GM12878 (cell line): ENCODE measurements at regions of chr1 and their contacts with region 1.

Region 1: DNA sequence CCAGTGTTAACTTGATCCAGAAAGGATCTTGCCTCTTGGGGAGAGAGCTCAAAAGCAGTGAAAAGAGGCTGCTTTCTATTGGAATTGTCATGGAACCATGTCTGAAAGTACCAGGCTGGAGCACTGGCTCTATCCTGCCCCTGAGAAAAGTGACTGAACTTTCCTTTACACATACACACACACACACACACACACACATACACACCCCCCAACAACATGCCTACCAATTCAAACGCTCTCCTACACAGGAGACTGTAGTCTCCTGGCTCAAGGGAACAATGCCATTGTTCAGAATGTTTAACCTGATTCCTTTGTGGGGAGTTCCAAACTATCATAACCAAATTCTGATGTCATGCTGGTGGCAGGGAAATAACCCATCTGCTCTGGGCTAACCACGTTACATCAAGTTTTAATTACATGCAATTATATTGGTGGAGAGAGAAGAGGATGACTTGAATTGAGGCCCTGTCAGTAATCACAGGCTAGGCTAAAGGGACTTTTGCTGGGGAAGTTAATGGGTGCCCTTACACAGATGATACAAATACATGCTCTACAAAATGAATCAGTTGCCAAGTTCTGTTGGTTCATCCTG is 52.3 kb upstream of the DUSP10 start:
- DNase-seq: peak; percentile 82
- ATAC-seq: peak; percentile 90
- H3K4me3 ChIP-seq: no peak overlapping the region
- H3K27ac ChIP-seq: peak overlapping the region; percentile 69
- H3K4me1 ChIP-seq: peaks cover 25% of the 10 kb centered on the region
- H3K27me3 ChIP-seq: no peaks in the 10 kb centered on the region
- CTCF ChIP-seq: no peak
- EP300 ChIP-seq: peak; percentile 88 to 93; a peak in 3 of 4 replicates
- POLR2A ChIP-seq: no peak; the same call in 1 of the 2 replicates
- RAD21 ChIP-seq: no peak

Region 2: DNA sequence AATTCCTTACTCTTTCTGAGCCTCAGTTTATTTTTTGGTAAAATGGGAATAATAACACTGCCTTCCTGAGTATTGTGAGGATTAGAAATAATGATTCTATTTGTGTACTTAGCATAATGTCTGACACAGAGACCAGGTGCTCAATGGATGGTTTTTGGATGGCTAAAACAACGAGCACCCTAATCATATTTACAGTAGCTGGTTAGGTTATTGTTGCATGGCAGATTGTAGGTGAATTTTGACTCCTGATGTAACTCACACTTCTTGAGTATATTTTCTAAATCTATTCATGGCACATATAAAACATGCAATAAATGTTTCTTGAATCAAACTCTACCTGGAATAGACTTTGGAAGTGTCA is 40.4 kb before region 1 on chr1:
- CTCF ChIA-PET with region 1: interaction called, 3 read pairs
- POLR2A ChIA-PET with region 1: interaction called, 7 read pairs
- RAD21 ChIA-PET with region 1: interaction called, 5 read pairs
- SMC1A ChIA-PET with region 1: interaction called, 11 read pairs
- in situ Hi-C with region 1: no loop called
- intact Hi-C with region 1: loop called (anchors 1 kb)
- DNase-seq: no peak
- ATAC-seq: peak; percentile 58
- H3K4me3 ChIP-seq: no peak overlapping the region
- H3K27ac ChIP-seq: peak overlapping the region; percentile 73
- H3K4me1 ChIP-seq: peaks cover 49% of the 10 kb centered on the region
- H3K27me3 ChIP-seq: no peaks in the 10 kb centered on the region
- CTCF ChIP-seq: no peak
- EP300 ChIP-seq: no peak
- POLR2A ChIP-seq: no peak
- RAD21 ChIP-seq: no peak

Region 3: GRCh38 chr1:221761354-221762002 is 32.7 kb before region 1 on chr1:
- CTCF ChIA-PET with region 1: interaction called, 3 read pairs
- POLR2A ChIA-PET with region 1: interaction called, 7 read pairs
- RAD21 ChIA-PET with region 1: interaction called, 10 read pairs
- SMC1A ChIA-PET with region 1: interaction called, 11 read pairs
- in situ Hi-C with region 1: no loop called
- intact Hi-C with region 1: no loop called
- DNase-seq: peak; percentile 91
- ATAC-seq: peak; percentile 80
- H3K4me3 ChIP-seq: peak overlapping the region; percentile 26; the same call in 1 of the 2 replicates
- H3K27ac ChIP-seq: peak overlapping the region; percentile 90
- H3K4me1 ChIP-seq: peaks cover 64% of the 10 kb centered on the region
- H3K27me3 ChIP-seq: no peaks in the 10 kb centered on the region
- CTCF ChIP-seq: no peak
- EP300 ChIP-seq: peak in 1 of 2 experiments; percentile 13; a peak in 1 of 4 replicates
- POLR2A ChIP-seq: 0 out of 2 replicates have a peak, but pooled peaks have one; percentile 26
- RAD21 ChIP-seq: 0 out of 2 replicates have a peak, but pooled peaks have one; percentile 6

Region 4: DNA sequence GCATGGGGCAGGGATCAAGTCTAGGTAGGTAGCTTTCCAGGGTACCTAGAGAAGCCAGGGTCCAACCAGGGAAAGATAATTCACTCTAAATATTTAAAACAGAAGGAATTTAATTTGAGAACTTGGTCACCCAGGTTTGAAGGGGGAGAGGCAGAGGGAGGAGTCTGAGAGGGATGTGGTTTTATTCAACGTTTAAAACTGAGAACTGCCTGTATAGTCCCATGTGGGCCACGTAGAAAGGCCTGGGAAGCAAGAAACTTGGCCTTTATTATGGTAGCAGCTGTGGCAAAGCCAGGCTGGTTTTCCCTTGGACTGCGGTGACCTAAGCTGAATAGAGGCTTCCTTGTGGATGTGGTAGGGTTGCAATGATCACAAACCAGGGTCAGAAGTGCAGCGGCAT is 10.2 kb before region 1 on chr1:
- CTCF ChIA-PET with region 1: interaction called, 17 read pairs
- POLR2A ChIA-PET with region 1: interaction called, 7 read pairs
- RAD21 ChIA-PET with region 1: interaction called, 69 read pairs
- SMC1A ChIA-PET with region 1: interaction called, 49 read pairs
- in situ Hi-C with region 1: no loop called
- intact Hi-C with region 1: no loop called
- DNase-seq: no peak
- ATAC-seq: peak; percentile 18; the same call in 2 of the 3 replicates
- H3K4me3 ChIP-seq: no peak overlapping the region
- H3K27ac ChIP-seq: no peak overlapping the region
- H3K4me1 ChIP-seq: peaks cover 51% of the 10 kb centered on the region
- H3K27me3 ChIP-seq: no peaks in the 10 kb centered on the region
- CTCF ChIP-seq: no peak
- EP300 ChIP-seq: no peak
- POLR2A ChIP-seq: no peak
- RAD21 ChIP-seq: no peak

Region 5: DNA sequence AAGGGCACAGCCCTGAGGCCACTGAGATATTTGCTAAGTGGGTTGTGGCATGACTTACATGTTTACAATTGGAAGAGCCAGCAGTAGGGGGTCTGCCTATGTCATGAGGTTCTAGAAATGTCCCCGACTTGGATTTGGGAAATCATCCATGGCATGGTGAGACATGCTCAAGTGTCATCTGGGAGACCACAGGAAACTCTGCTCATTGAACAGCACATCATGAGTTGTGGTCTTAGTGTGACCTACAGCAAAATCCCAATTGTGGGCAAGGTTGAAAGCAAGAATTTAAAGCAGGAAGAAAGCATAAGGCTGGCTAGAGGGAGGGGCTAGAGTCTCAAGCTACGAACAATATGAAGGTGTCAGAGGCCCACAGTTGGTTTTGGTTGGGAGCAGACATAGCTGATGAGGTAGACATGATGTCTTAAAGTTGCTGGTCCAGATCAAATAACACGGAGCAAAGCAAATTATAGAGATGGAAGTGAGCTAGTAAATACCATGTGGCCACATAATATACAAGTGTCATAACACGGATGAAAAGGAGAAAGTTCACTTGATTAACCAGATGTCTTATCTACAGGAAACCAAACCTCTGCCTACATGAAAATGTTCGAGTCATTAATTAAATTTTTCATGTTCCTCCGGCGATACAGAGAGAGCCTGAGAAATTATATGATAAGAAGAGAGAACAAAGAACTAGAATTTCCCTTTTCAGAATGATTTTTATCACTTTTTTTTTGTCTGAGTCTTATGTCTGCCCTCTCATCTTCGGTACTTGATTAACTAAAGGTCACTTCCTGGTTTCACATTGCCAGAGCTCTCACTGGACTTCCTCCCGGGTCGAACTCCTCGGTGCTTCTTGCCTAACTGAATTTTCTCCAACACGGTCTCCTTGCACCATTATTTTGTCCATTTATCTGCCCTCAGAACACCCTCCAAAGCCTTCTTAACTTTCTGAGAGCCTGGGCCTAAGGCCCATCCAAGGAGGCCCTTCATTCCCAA is 15.2 kb after region 1 on chr1:
- CTCF ChIA-PET with region 1: interaction called, 9 read pairs
- POLR2A ChIA-PET with region 1: interaction called, 7 read pairs
- RAD21 ChIA-PET with region 1: interaction called, 5 read pairs
- SMC1A ChIA-PET with region 1: interaction called, 26 read pairs
- in situ Hi-C with region 1: no loop called
- intact Hi-C with region 1: no loop called
- DNase-seq: no peak
- ATAC-seq: peak; percentile 73
- H3K4me3 ChIP-seq: 0 out of 2 replicates have a peak overlapping the region, but pooled peaks have one; percentile 0
- H3K27ac ChIP-seq: 0 out of 2 replicates have a peak overlapping the region, but pooled peaks have one; percentile 6
- H3K4me1 ChIP-seq: peaks cover 18% of the 10 kb centered on the region
- H3K27me3 ChIP-seq: no peaks in the 10 kb centered on the region
- CTCF ChIP-seq: no peak
- EP300 ChIP-seq: no peak; a peak in 1 of 4 replicates
- POLR2A ChIP-seq: no peak
- RAD21 ChIP-seq: no peak

Region 6: DNA sequence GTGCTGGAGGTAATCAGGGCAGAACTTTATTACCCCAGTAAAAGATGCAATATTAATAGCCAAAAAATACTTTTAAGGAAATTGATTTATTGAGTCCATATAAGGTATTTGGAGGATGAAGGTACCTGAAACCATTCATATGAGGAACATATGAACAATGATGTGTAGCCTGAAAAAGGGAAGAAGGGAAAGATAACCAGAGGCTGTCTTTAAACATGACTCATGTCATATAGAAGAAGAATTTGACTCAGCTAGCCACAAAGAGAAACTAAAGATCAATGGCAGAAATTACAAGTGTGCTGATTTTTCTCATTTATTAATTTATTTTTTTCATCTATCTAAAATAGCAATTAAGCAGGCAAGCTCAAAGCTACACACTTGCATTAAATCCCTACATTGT is 84.0 kb after region 1 on chr1:
- CTCF ChIA-PET with region 1: no interaction called
- POLR2A ChIA-PET with region 1: no interaction called
- RAD21 ChIA-PET with region 1: interaction called, 7 read pairs
- SMC1A ChIA-PET with region 1: interaction called, 9 read pairs
- in situ Hi-C with region 1: no loop called
- intact Hi-C with region 1: loop called (anchors 5 kb)
- DNase-seq: peak; percentile 45
- ATAC-seq: peak; percentile 78
- H3K4me3 ChIP-seq: no peak overlapping the region
- H3K27ac ChIP-seq: peak overlapping the region; percentile 18; the same call in 1 of the 2 replicates
- H3K4me1 ChIP-seq: peaks cover 22% of the 10 kb centered on the region
- H3K27me3 ChIP-seq: no peaks in the 10 kb centered on the region
- CTCF ChIP-seq: no peak
- EP300 ChIP-seq: peak; percentile 54 to 86; a peak in 2 of 4 replicates
- POLR2A ChIP-seq: no peak
- RAD21 ChIP-seq: no peak

Region 7: DNA sequence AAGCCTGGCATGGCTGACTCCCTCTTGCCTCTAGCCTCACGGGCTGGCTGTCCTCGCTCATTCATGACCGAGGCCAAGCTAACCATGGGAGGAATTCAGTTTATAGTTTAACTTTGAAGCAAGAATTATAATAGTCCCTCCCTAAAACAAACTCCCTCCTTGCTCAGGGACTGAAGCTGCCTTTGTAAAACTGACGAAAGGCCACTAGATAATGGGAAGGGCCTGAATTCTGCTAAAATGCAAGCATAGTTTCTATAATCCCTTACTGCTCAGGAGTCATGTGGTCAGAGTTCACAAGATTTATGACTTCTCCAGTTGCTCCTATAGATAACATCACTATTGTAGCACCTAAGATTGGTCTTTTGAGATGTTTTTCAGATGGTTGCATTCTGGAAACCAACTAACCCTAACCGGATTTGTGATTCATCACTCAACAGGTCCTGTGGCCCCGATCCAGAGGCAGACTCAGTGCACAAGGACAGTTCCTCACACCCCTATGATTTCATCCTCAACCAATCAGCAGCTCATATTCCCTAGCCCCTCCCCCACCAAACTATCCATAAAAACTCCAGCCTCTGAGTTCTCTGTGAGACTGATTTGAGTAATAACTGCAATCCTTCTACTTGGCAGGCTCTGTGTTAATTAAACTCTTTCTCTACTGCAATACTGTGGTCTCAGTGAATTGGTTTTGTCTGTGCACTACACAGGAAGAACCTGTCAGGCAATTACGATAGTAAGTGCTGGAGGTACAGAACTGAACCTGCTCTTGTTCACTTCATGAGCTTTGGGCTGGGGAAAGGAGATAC is 727.3 kb after region 1 on chr1:
- CTCF ChIA-PET with region 1: no interaction called
- POLR2A ChIA-PET with region 1: no interaction called
- RAD21 ChIA-PET with region 1: no interaction called
- SMC1A ChIA-PET with region 1: no interaction called
- in situ Hi-C with region 1: no loop called
- intact Hi-C with region 1: no loop called
- DNase-seq: no peak
- ATAC-seq: no peak
- H3K4me3 ChIP-seq: no peak overlapping the region
- H3K27ac ChIP-seq: no peak overlapping the region
- H3K4me1 ChIP-seq: no peaks in the 10 kb centered on the region
- H3K27me3 ChIP-seq: no peaks in the 10 kb centered on the region; a peak in 1 of 4 replicates
- CTCF ChIP-seq: no peak
- EP300 ChIP-seq: no peak
- POLR2A ChIP-seq: no peak
- RAD21 ChIP-seq: no peak